Pancreas (tissue), 10 donors: ENCODE measurements at regions of chr12 and their contacts with region 1.

Region 1: DNA sequence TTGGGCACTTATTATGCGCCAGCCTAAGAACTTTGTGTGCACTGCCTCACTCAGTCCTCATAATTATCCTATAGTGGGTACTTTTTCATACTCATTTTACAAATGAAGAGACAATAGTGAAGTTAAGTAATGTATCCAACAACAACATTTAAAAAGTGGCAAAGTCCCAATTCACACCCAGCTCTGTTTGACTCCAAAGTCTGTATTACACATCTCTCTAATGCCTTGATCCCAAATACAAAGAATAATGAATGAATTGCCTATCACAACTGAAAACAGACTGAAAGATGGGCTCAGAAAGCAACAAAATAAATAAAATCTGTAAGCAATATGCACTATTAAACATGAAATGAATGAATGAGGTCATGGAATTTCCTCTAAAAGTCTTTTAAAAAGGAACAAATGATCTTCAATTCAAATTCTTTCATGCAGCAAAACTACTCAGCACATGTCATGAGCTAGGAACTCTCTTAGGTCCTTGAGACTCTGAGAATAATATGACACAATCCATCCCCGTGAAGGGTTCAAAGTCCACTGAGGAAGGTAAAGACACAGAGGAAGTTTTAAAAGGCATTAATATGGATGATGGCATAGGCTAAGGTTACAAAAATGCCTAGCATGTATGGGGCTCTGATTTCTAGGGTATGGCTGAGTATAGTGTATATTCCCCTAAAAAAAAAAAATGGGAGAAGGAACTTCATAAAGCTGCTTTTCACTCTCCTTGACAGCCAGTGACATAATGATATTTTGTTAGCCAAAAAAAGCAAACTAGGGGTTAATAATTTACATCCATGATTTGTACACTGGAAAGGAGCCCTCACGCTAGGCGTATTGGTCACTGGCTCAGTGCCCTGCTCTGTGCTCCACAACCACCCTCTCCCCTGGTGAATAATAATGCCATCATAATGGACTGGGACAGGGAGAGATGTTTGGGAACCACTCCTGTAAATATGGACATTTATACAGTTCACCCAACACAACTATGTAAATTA is 103.4 kb downstream of the SLC2A13 start:
- DNase-seq: peak in 3 of 6 donors; percentile 11 to 37 (median 28)
- ATAC-seq: peak; percentile 73 to 94 (median 92)
- H3K4me3 ChIP-seq: no peak overlapping the region
- H3K27ac ChIP-seq: no peak overlapping the region
- H3K4me1 ChIP-seq: peaks cover 4 to 8% (median 5%) of the 10 kb centered on the region in 3 donors
- H3K27me3 ChIP-seq: no peaks in the 10 kb centered on the region
- CTCF ChIP-seq: no peak

Region 2: DNA sequence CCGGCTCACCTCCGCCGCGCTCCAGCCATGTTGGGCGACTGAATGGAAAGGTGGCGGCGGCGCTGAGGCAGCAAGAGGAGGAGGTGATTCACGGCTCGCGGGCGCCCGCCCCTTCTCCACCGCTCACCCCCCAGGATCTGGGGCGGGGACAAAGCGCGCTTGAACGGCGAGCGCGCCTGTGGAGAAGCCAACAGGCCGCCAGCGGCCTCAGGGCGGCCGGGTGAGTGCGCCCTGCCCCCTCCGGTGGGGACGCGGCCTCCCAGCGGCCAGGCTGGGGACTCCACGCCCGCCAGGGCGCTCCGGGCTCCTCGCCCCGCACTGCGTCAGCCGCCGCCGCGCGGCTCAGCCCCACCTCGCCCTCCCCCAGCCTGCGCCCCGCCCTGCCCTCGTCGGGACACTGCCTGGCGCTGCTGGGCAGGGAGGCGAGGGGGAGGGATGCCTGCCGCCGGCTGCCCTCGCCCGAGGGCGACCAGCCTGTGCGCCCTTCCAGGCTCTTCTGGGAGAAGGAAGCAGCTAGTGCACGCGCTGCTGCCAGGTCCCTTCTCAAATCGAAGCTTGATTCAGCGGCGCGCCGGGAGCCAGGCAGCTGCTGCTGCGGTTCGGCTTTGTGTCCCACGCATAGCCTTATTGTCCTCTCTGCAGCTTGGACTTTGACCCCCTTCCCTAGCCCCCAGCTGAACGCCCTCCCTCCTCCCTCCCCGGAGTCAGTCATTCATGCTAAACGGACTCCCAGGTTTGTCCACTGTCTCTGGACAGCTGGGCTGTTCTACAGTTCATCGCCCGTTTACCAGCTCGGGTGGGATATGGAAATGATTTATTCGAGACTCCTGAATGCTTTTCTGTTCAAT is 559.2 kb before region 1 on chr12 and contains the start of gene KIF21A:
- intact Hi-C with region 1: loop called in 1 of 3 experiments (anchors 10 kb)
- DNase-seq: peak; percentile 92 to 97 (median 96)
- ATAC-seq: peak; percentile 90 to 94 (median 92)
- H3K4me3 ChIP-seq: peak within 1 kb of the TSS; percentile 71 to 98 (median 76)
- H3K27ac ChIP-seq: peak within 1 kb of the TSS; percentile 91 to 95 (median 94)
- H3K4me1 ChIP-seq: peaks cover 0 to 23% (median 10%) of the 10 kb centered on the region in 3 donors
- H3K27me3 ChIP-seq: no peaks in the 10 kb centered on the region
- CTCF ChIP-seq: peak; percentile 71 to 86 (median 77)
- total RNA-seq, gene KIF21A: 11.0 to 17.3 (median 15.9) TPM

Region 3: GRCh38 chr12:39931857-39932256 is 70.6 kb before region 1 on chr12:
- intact Hi-C with region 1: no loop called
- DNase-seq: no peak
- ATAC-seq: peak in 1 of 4 donors; percentile 46
- H3K4me3 ChIP-seq: no peak overlapping the region
- H3K27ac ChIP-seq: no peak overlapping the region
- H3K4me1 ChIP-seq: peaks cover 0 to 10% (median 0%) of the 10 kb centered on the region in 3 donors
- H3K27me3 ChIP-seq: no peaks in the 10 kb centered on the region
- CTCF ChIP-seq: no peak

Region 4: DNA sequence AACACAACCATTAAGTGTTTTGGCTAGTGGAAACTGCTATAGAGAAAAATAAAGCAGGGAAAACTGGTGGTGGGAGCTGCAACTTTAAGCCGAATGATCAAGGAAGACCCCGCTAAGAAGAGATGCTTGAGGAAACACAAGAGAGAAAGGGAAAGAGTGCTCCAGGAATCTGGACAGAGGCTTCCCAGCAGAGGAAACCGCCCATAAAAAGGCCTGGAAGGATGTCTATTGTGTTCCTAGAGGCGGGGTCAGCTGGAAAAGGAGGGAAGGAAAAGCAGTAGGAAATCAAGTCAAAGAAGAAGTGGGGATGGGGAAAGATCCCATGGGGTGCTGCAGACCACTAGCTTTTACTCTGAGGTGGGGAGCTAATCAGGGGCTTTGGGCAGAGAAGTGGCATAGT is 91.0 kb after region 1 on chr12:
- intact Hi-C with region 1: no loop called
- DNase-seq: no peak
- ATAC-seq: no peak
- H3K4me3 ChIP-seq: no peak overlapping the region
- H3K27ac ChIP-seq: no peak overlapping the region
- H3K4me1 ChIP-seq: peaks cover 0 to 10% (median 6%) of the 10 kb centered on the region in 3 donors
- H3K27me3 ChIP-seq: no peaks in the 10 kb centered on the region
- CTCF ChIP-seq: no peak

Region 5: DNA sequence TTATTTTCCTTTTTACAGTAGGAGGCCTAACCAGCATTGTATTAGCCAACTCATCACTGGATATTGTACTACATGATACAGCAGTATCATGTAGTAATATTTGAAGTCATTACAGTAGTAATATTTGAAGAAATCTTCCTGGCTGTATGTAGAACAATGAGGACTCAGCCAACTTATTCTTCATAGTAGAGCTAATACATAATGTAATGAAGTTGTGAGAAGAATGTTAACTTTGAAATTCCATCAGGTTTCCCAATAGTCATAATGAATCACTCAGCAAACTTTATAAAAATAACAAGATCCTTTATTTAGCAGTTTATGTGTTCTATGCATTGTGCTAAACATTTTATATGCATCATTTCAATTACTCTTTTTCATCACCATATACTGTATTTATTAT is 284.1 kb after region 1 on chr12:
- intact Hi-C with region 1: no loop called
- DNase-seq: no peak
- ATAC-seq: no peak
- H3K4me3 ChIP-seq: no peak overlapping the region
- H3K27ac ChIP-seq: no peak overlapping the region
- H3K4me1 ChIP-seq: no peaks in the 10 kb centered on the region
- H3K27me3 ChIP-seq: no peaks in the 10 kb centered on the region
- CTCF ChIP-seq: no peak